ENCODE measurements at regions of chr5 and their contacts with region 1.

Region 1: GRCh38 chr5:108681079-108681921 is 66.4 kb upstream of the FER start:
- DNase-seq: peak; percentile 67
- ATAC-seq: peak; percentile 98
- H3K4me3 ChIP-seq: peak overlapping the region; percentile 37; the same call in 1 of the 2 replicates
- H3K27ac ChIP-seq: peak overlapping the region; percentile 66
- H3K4me1 ChIP-seq: peaks cover 3% of the 10 kb centered on the region; the same call in 1 of the 2 replicates
- H3K27me3 ChIP-seq: no peaks in the 10 kb centered on the region
- CTCF ChIP-seq: peak; percentile 81 to 89 (median 86)
- EP300 ChIP-seq: no peak
- POLR2A ChIP-seq: no peak
- RAD21 ChIP-seq: peak; percentile 100

Region 2: DNA sequence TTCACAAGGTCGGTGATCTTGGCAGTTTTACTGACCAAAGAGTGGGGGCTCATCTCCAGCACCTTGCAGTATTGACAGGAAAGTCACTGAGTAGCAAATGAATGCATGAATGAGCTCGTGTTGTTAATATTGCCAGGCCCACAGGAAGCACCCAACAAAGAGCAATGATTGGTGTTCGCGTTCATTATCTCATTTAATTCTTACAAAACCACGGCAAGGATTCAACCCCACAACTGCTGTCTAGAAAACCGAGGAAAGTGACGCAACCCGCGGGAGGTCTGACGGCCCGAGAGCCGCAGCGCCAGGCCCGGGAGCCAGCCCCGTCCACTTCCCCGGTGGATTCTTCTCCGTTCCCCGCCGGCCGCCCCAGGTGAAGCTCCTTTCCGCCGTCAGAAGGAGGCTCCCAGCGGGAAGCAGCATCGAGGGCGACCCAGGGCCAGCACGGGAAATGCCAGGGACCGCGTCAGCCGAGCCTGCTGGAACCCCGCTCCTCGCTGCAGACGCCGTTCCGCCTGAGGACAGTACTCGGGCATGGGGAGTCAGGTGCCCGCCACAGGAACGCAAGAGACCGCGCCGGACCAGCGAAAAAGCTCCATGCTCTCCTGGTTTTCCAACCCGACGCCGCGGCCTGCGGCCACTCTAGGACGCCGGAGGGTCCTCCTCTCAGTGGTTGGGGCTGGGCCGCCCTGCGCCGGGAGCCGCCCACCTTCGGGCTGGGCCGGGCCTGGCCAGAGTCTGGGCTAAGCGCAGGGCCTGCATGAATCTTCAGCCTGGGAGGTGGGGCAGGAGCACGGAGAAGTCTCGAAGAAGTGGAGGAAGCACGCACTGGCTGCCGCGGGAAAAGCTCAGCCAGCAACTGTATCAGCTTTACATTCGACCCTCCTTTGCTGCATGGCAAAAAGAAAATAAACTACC is 46.6 kb after region 1 on chr5:
- CTCF ChIA-PET with region 1: interaction called, 14 read pairs
- POLR2A ChIA-PET with region 1: interaction called, 4 read pairs
- RAD21 ChIA-PET with region 1: interaction called, 5 read pairs
- SMC1A ChIA-PET with region 1: interaction called, 8 read pairs
- in situ Hi-C with region 1: no loop called
- intact Hi-C with region 1: no loop called
- DNase-seq: no peak
- ATAC-seq: peak; percentile 91
- H3K4me3 ChIP-seq: peak overlapping the region; percentile 67
- H3K27ac ChIP-seq: peak overlapping the region; percentile 92
- H3K4me1 ChIP-seq: peaks cover 28% of the 10 kb centered on the region
- H3K27me3 ChIP-seq: no peaks in the 10 kb centered on the region
- CTCF ChIP-seq: no peak
- EP300 ChIP-seq: no peak
- POLR2A ChIP-seq: peak; percentile 79
- RAD21 ChIP-seq: no peak

Region 3: DNA sequence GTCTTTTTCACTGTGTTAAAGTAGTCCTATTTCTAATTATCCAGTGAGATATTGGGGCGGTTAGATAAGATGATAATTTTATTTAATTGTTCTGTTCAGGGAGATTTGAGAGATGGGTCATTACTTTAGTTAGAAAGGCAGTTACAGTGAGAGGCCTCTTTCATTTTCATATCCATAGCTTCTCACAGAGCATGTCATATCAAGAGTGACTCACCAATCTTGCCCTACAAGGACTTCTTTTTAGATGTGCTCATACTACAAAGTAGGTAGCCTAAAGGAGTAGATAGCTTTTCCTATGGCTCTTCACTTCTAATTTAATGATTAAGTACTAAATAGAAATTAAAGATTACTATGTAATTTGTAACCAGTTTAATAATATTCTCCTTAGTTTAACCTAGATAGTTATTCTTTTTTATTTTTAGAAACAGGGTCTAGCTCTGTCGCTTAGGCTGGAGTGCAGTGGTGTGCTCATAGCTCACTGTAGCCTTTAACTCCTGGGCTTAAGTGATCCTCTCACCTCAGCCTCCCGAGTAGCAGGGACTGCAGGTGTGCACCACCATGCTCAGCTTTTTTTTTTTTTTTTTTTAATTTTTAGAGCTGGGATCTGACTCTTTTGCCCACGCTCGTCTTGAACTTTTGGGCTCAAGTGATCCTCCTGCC is 137.4 kb after region 1 on chr5:
- CTCF ChIA-PET with region 1: interaction called, 3 read pairs
- POLR2A ChIA-PET with region 1: no interaction called
- RAD21 ChIA-PET with region 1: no interaction called
- SMC1A ChIA-PET with region 1: no interaction called
- in situ Hi-C with region 1: no loop called
- intact Hi-C with region 1: loop called (anchors 10 kb)
- DNase-seq: peak; percentile 31
- ATAC-seq: peak; percentile 99
- H3K4me3 ChIP-seq: no peak overlapping the region
- H3K27ac ChIP-seq: peak overlapping the region; percentile 39; the same call in 1 of the 2 replicates
- H3K4me1 ChIP-seq: no peaks in the 10 kb centered on the region
- H3K27me3 ChIP-seq: no peaks in the 10 kb centered on the region
- CTCF ChIP-seq: no peak
- EP300 ChIP-seq: no peak
- POLR2A ChIP-seq: no peak
- RAD21 ChIP-seq: no peak

Region 4: GRCh38 chr5:109155625-109156024 is 474.3 kb after region 1 on chr5:
- CTCF ChIA-PET with region 1: no interaction called
- POLR2A ChIA-PET with region 1: no interaction called
- RAD21 ChIA-PET with region 1: no interaction called
- SMC1A ChIA-PET with region 1: no interaction called
- in situ Hi-C with region 1: no loop called
- intact Hi-C with region 1: loop called (anchors 10 kb)
- DNase-seq: no peak
- ATAC-seq: peak; percentile 64
- H3K4me3 ChIP-seq: no peak overlapping the region
- H3K27ac ChIP-seq: no peak overlapping the region
- H3K4me1 ChIP-seq: no peaks in the 10 kb centered on the region
- H3K27me3 ChIP-seq: no peaks in the 10 kb centered on the region
- CTCF ChIP-seq: no peak
- EP300 ChIP-seq: no peak
- POLR2A ChIP-seq: no peak
- RAD21 ChIP-seq: no peak

Region 5: GRCh38 chr5:109468737-109469420 is 787.6 kb after region 1 on chr5:
- CTCF ChIA-PET with region 1: interaction called, 7 read pairs
- POLR2A ChIA-PET with region 1: no interaction called
- RAD21 ChIA-PET with region 1: interaction called, 4 read pairs
- SMC1A ChIA-PET with region 1: interaction called, 4 read pairs
- in situ Hi-C with region 1: no loop called
- intact Hi-C with region 1: loop called (anchors 2 kb)
- DNase-seq: peak; percentile 63
- ATAC-seq: peak; percentile 95
- H3K4me3 ChIP-seq: no peak overlapping the region
- H3K27ac ChIP-seq: no peak overlapping the region
- H3K4me1 ChIP-seq: peaks cover 7% of the 10 kb centered on the region
- H3K27me3 ChIP-seq: no peaks in the 10 kb centered on the region
- CTCF ChIP-seq: peak; percentile 77 to 90 (median 77)
- EP300 ChIP-seq: no peak
- POLR2A ChIP-seq: no peak
- RAD21 ChIP-seq: peak; percentile 73